PC-9 (cell line): ENCODE measurements at regions of chr3 and their contacts with region 1.

Region 1: DNA sequence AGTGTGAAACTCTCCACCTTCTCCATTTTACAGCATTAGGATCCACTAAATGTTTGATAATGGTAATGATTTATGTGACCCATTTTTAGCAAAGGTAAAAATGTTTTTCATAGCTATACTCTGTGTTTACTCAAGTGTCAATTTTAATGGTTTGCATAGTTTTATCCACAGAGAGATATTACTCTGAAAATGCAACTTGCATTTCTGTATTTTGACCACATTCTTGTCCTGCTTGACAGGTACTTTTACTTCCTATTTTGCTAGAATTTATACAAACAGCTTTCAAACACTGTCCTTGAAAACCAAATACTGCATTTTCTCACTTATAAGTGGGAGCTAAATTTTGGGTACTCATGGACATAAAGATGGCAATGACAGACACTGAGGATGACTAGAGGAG is 62.9 kb downstream of the SERPINI1 start:
- DNase-seq: no peak
- H3K4me3 ChIP-seq: no peak overlapping the region
- H3K27ac ChIP-seq: no peak overlapping the region
- H3K4me1 ChIP-seq: no peaks in the 10 kb centered on the region
- H3K27me3 ChIP-seq: no peaks in the 10 kb centered on the region
- CTCF ChIP-seq: no peak

Region 2: DNA sequence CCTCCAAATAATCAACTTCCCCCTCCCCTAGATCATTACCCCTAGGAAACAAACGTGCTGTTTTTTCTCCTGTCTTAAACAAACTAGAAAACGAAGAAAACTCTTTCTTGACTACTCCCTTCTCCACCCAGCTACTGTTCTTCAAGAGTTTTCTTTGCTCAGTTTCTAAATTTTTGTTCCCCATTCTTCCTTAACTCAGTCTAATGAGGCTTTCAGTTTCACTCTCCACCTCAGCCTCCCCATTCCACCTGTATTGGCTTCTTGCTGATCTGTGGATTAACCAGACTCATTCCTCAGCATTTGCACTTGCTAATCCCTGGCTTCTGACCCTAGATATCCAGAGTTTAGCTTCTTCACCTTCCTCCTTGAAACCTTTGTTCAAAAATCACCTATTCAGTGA is 36.1 kb before region 1 on chr3:
- CTCF ChIA-PET with region 1: no interaction called
- POLR2A ChIA-PET with region 1: interaction called, 15 read pairs
- intact Hi-C with region 1: no loop called
- DNase-seq: no peak
- H3K4me3 ChIP-seq: no peak overlapping the region
- H3K27ac ChIP-seq: no peak overlapping the region
- H3K4me1 ChIP-seq: no peaks in the 10 kb centered on the region
- H3K27me3 ChIP-seq: no peaks in the 10 kb centered on the region
- CTCF ChIP-seq: no peak

Region 3: DNA sequence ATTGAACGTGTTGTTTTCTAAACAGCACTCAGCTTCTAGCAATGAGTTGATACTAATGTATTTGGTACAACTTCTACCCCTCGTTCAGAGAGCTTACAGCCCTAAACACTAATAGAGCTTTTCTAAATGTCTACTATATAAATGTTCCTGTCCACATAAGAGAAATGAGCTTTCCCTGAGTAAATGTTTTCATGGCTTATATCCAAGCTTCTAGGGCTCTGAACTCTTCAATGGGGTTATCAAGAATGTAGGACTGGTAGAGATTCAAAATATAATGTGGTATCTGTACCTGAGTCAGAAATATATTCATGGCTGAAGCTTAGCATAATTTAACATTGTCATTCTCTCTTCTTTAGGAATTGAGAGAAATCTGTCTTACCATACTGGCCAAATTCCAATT is 10.5 kb after region 1 on chr3:
- CTCF ChIA-PET with region 1: no interaction called
- POLR2A ChIA-PET with region 1: no interaction called
- intact Hi-C with region 1: loop called (anchors 1 kb)
- DNase-seq: no peak
- H3K4me3 ChIP-seq: no peak overlapping the region
- H3K27ac ChIP-seq: no peak overlapping the region
- H3K4me1 ChIP-seq: no peaks in the 10 kb centered on the region
- H3K27me3 ChIP-seq: no peaks in the 10 kb centered on the region
- CTCF ChIP-seq: no peak

Region 4: GRCh38 chr3:167852216-167852615 is 53.8 kb after region 1 on chr3:
- CTCF ChIA-PET with region 1: no interaction called
- POLR2A ChIA-PET with region 1: no interaction called
- intact Hi-C with region 1: no loop called
- DNase-seq: no peak
- H3K4me3 ChIP-seq: no peak overlapping the region
- H3K27ac ChIP-seq: no peak overlapping the region
- H3K4me1 ChIP-seq: no peaks in the 10 kb centered on the region
- H3K27me3 ChIP-seq: no peaks in the 10 kb centered on the region
- CTCF ChIP-seq: no peak